Naive thymus-derived CD4-positive, alpha-beta T cell (primary cell): ENCODE measurements at regions of chr6 and their contacts with region 1.

Region 1: DNA sequence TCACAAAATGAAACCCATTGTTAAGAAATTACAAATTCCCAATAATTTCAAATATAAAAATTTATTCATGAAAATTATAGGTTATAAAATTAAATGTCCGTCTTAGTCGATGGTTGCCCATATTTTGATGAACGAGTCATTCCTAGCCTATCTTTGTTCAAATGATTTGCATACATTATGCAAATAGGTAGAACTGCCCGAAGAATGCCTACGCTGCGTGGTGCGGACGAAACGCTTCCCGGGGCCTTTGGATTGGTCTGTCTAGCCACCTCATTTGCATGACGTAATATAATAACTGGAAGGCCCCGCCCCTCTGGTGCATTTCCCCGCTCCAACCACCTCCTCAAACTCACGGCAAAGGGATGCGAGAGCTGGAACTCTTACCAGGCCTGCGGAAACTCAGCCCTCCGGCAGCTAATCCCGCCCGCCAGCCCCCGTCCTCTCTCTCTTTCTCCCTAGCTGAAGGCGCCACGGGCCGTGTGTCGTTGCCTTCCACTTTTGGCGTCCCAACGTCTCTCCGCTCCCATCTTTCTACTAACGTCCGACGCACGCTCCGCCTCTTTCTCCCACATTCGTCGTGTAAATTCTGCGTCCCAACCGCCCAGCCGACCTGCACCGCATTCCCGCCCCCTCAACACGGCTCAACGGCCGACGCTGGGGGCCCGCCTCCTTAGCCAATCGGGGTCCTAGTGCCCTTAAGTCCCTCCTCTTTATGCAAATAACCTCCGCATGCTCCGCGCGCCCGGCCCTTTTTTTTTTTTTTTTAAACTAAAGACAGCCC is 520 bp upstream of the PRRC2A start:
- DNase-seq: peak; percentile 81 to 97 (median 94)
- ATAC-seq: peak; percentile 88
- H3K4me3 ChIP-seq: peak overlapping the region; percentile 90
- H3K4me3 Mint-ChIP-seq: peak overlapping the region; percentile 87 to 97 (median 93)
- H3K27ac ChIP-seq: peak overlapping the region; percentile 96
- H3K27ac Mint-ChIP-seq: peak overlapping the region; percentile 95 to 99 (median 96)
- H3K4me1 ChIP-seq: peaks cover 14 to 23% of the 10 kb centered on the region in 2 donors
- H3K4me1 Mint-ChIP-seq: peaks cover 26 to 60% (median 53%) of the 10 kb centered on the region in 7 donors
- H3K27me3 ChIP-seq: no peaks in the 10 kb centered on the region
- H3K27me3 Mint-ChIP-seq: no peaks in the 10 kb centered on the region

Region 2: GRCh38 chr6:30556066-30556905 is 1063.7 kb before region 1 on chr6 and contains the start of gene GNL1:
- CTCF ChIA-PET with region 1: no interaction called
- POLR2A ChIA-PET with region 1: no interaction called
- intact Hi-C with region 1: loop called in 1 of 2 experiments (anchors 5 kb)
- DNase-seq: peak; percentile 95 to 99 (median 99)
- ATAC-seq: peak; percentile 94
- H3K4me3 ChIP-seq: peak within 1 kb of the TSS; percentile 97
- H3K4me3 Mint-ChIP-seq: peak within 1 kb of the TSS; percentile 92 to 100 (median 98)
- H3K27ac ChIP-seq: peak within 1 kb of the TSS; percentile 97
- H3K27ac Mint-ChIP-seq: peak within 1 kb of the TSS; percentile 98 to 100 (median 99)
- H3K4me1 ChIP-seq: peaks cover 8 to 19% of the 10 kb centered on the region in 2 donors
- H3K4me1 Mint-ChIP-seq: peaks cover 25 to 58% (median 45%) of the 10 kb centered on the region in 7 donors
- H3K27me3 ChIP-seq: no peaks in the 10 kb centered on the region
- H3K27me3 Mint-ChIP-seq: no peaks in the 10 kb centered on the region
- total RNA-seq, gene GNL1: 56.0 to 190 (median 73.1) TPM

Region 3: GRCh38 chr6:31546962-31547726 is 72.9 kb before region 1 on chr6 and contains the start of gene NFKBIL1:
- CTCF ChIA-PET with region 1: interaction called, 5 read pairs
- POLR2A ChIA-PET with region 1: interaction called, 3,078 read pairs
- intact Hi-C with region 1: loop called (anchors 1 kb)
- DNase-seq: peak; percentile 53 to 90 (median 84)
- ATAC-seq: peak; percentile 91
- H3K4me3 ChIP-seq: peak within 1 kb of the TSS; percentile 68
- H3K4me3 Mint-ChIP-seq: peak within 1 kb of the TSS; percentile 81 to 97 (median 91)
- H3K27ac ChIP-seq: peak within 1 kb of the TSS; percentile 89
- H3K27ac Mint-ChIP-seq: peak within 1 kb of the TSS; percentile 78 to 98 (median 95)
- H3K4me1 ChIP-seq: peaks cover 22 to 31% of the 10 kb centered on the region in 2 donors
- H3K4me1 Mint-ChIP-seq: peaks cover 22 to 57% (median 48%) of the 10 kb centered on the region in 7 donors
- H3K27me3 ChIP-seq: no peaks in the 10 kb centered on the region
- H3K27me3 Mint-ChIP-seq: no peaks in the 10 kb centered on the region
- total RNA-seq, gene NFKBIL1: 8.7 to 17.2 (median 11.6) TPM

Region 4: GRCh38 chr6:31639449-31639861 is 19.5 kb after region 1 on chr6:
- CTCF ChIA-PET with region 1: no interaction called
- POLR2A ChIA-PET with region 1: interaction called, 12 read pairs
- intact Hi-C with region 1: loop called in 1 of 2 experiments (anchors 2 kb)
- DNase-seq: no peak
- ATAC-seq: no peak
- H3K4me3 ChIP-seq: no peak overlapping the region
- H3K4me3 Mint-ChIP-seq: no peak overlapping the region
- H3K27ac ChIP-seq: no peak overlapping the region
- H3K27ac Mint-ChIP-seq: peak overlapping the region in 1 of 9 donors; percentile 49
- H3K4me1 ChIP-seq: no peaks in the 10 kb centered on the region
- H3K4me1 Mint-ChIP-seq: peaks cover 0 to 7% (median 0%) of the 10 kb centered on the region in 7 donors
- H3K27me3 ChIP-seq: no peaks in the 10 kb centered on the region
- H3K27me3 Mint-ChIP-seq: no peaks in the 10 kb centered on the region

Region 5: DNA sequence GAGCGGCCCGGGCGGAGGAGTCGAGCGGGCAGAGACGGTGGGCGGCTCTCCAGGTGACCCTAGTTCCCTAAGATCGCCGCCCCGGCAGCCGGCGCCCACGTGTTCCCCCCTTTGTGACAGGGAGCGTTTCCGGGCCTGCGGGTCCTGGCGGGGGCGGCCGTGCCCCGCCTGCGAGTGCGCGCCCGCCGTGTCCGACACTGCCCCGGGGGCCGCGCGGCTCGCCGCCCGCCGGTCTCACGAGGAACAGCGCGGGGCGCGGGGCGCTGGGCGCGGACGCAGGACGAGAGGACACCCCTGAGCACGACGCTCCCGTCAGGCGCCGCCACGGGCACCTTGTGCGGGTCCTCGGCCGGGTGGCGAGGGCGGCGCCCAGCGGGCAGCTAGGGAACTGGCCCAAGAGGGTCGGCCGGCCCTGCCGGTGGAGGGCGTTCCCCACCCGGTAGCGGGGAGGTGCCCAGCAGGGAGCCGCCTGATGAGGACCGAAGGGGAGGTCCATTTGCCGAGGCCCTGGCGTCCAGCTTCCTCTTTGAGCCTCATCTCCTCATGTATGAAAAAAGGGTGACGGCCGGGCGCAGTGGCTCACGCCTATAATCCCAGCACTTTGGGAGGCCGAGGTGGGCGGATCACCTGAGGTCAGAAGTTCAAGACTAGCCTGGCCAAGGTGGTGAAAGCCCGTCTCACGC is 175.8 kb after region 1 on chr6 and contains the start of gene VARS1:
- CTCF ChIA-PET with region 1: no interaction called
- POLR2A ChIA-PET with region 1: no interaction called
- intact Hi-C with region 1: loop called in 1 of 2 experiments (anchors 1 kb)
- DNase-seq: peak; percentile 75 to 92 (median 85)
- ATAC-seq: peak; percentile 96
- H3K4me3 ChIP-seq: peak within 1 kb of the TSS; percentile 76
- H3K4me3 Mint-ChIP-seq: peak within 1 kb of the TSS; percentile 85 to 99 (median 96)
- H3K27ac ChIP-seq: peak within 1 kb of the TSS; percentile 93
- H3K27ac Mint-ChIP-seq: peak within 1 kb of the TSS; percentile 80 to 99 (median 98)
- H3K4me1 ChIP-seq: peaks cover 24 to 32% of the 10 kb centered on the region in 2 donors
- H3K4me1 Mint-ChIP-seq: peaks cover 12 to 55% (median 36%) of the 10 kb centered on the region in 7 donors
- H3K27me3 ChIP-seq: no peaks in the 10 kb centered on the region
- H3K27me3 Mint-ChIP-seq: no peaks in the 10 kb centered on the region
- total RNA-seq, gene VARS1: 34.3 to 84.2 (median 53.2) TPM

Region 6: DNA sequence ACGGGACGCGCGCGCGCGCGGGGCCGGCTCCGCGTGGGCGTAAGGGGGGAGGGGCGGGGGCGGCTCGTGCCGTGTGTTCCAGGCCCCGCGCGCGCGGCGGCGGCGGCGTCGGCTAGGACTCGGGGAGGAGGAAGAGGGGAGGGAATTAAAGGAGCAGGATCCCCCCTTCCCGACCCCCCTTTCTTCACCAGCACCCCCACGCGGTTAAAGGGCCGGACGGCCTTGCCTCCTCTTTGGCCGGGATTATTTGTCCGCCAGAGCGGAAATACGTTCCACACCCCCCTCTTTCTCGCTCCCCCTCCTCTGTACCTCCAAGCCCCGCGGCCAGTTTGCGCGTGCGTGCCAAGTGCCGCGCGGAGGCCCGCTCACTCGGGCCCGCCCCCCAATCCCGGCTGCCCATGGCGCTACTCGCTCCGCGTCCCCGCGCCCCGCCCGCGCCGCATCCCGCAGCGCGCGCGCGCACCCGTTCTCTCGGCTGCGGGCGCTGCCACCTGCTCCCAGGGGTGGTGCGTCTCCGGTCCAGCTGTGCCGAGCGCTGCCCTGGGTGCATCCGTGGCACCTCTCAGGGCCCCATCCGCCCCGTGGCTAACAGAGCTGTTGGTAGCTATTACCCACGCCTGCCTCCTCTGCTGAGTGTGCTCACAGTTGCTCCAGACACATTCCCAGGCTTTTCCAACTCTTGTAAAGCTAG is 282.1 kb after region 1 on chr6 and contains the start of gene ZBTB12:
- CTCF ChIA-PET with region 1: no interaction called
- POLR2A ChIA-PET with region 1: no interaction called
- intact Hi-C with region 1: loop called in 1 of 2 experiments (anchors 1 kb)
- DNase-seq: peak; percentile 76 to 90 (median 84)
- ATAC-seq: peak; percentile 76
- H3K4me3 ChIP-seq: peak within 1 kb of the TSS; percentile 80
- H3K4me3 Mint-ChIP-seq: peak within 1 kb of the TSS; percentile 81 to 96 (median 88)
- H3K27ac ChIP-seq: peak within 1 kb of the TSS; percentile 83
- H3K27ac Mint-ChIP-seq: peak within 1 kb of the TSS; percentile 75 to 94 (median 86)
- H3K4me1 ChIP-seq: peaks cover 12 to 16% of the 10 kb centered on the region in 2 donors
- H3K4me1 Mint-ChIP-seq: peaks cover 18 to 34% (median 32%) of the 10 kb centered on the region in 7 donors
- H3K27me3 ChIP-seq: no peaks in the 10 kb centered on the region
- H3K27me3 Mint-ChIP-seq: peaks cover 0 to 11% (median 0%) of the 10 kb centered on the region in 5 donors
- total RNA-seq, gene ZBTB12: 0.77 to 4.5 (median 2.5) TPM

Region 7: GRCh38 chr6:32195652-32195901 is 575.6 kb after region 1 on chr6:
- CTCF ChIA-PET with region 1: no interaction called
- POLR2A ChIA-PET with region 1: no interaction called
- intact Hi-C with region 1: no loop called
- DNase-seq: peak; percentile 94 to 100 (median 98)
- ATAC-seq: peak; percentile 89
- H3K4me3 ChIP-seq: peak overlapping the region; percentile 98
- H3K4me3 Mint-ChIP-seq: peak overlapping the region; percentile 92 to 99 (median 97)
- H3K27ac ChIP-seq: peak overlapping the region; percentile 97
- H3K27ac Mint-ChIP-seq: peak overlapping the region; percentile 86 to 99 (median 97)
- H3K4me1 ChIP-seq: peaks cover 20 to 29% of the 10 kb centered on the region in 2 donors
- H3K4me1 Mint-ChIP-seq: peaks cover 24 to 40% (median 31%) of the 10 kb centered on the region in 7 donors
- H3K27me3 ChIP-seq: no peaks in the 10 kb centered on the region
- H3K27me3 Mint-ChIP-seq: no peaks in the 10 kb centered on the region

Region 8: DNA sequence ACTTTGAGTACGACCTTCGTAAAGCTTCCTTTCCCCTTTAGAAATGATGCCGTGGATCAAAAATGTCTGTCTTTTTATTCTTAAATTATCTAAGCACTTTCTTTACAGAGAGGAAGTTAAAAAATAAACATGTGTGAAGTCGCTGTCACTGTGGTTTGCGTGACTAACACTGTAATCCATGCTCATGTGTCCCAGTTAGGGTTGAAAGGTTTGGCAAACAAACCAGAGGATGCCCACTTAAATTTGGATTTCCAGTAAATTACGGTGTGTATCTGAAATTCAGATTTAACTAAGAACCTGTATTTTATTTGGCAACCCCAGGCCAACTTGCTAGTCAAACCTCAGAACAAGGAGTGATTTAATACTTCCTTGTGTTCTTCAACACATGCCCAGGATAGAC is 948.6 kb after region 1 on chr6:
- CTCF ChIA-PET with region 1: no interaction called
- POLR2A ChIA-PET with region 1: no interaction called
- intact Hi-C with region 1: no loop called
- DNase-seq: no peak
- ATAC-seq: no peak
- H3K4me3 ChIP-seq: no peak overlapping the region
- H3K4me3 Mint-ChIP-seq: peak overlapping the region in 2 of 10 donors; percentile 30 to 39
- H3K27ac ChIP-seq: no peak overlapping the region
- H3K27ac Mint-ChIP-seq: peak overlapping the region in 2 of 9 donors; percentile 34 to 46
- H3K4me1 ChIP-seq: no peaks in the 10 kb centered on the region
- H3K4me1 Mint-ChIP-seq: peaks cover 0 to 11% (median 3%) of the 10 kb centered on the region in 7 donors
- H3K27me3 ChIP-seq: no peaks in the 10 kb centered on the region
- H3K27me3 Mint-ChIP-seq: peaks cover 0 to 28% (median 0%) of the 10 kb centered on the region in 5 donors